Left ventricle myocardium superior (tissue), 1 donor: ENCODE measurements at regions of chr2 and their contacts with region 1.

Region 1: DNA sequence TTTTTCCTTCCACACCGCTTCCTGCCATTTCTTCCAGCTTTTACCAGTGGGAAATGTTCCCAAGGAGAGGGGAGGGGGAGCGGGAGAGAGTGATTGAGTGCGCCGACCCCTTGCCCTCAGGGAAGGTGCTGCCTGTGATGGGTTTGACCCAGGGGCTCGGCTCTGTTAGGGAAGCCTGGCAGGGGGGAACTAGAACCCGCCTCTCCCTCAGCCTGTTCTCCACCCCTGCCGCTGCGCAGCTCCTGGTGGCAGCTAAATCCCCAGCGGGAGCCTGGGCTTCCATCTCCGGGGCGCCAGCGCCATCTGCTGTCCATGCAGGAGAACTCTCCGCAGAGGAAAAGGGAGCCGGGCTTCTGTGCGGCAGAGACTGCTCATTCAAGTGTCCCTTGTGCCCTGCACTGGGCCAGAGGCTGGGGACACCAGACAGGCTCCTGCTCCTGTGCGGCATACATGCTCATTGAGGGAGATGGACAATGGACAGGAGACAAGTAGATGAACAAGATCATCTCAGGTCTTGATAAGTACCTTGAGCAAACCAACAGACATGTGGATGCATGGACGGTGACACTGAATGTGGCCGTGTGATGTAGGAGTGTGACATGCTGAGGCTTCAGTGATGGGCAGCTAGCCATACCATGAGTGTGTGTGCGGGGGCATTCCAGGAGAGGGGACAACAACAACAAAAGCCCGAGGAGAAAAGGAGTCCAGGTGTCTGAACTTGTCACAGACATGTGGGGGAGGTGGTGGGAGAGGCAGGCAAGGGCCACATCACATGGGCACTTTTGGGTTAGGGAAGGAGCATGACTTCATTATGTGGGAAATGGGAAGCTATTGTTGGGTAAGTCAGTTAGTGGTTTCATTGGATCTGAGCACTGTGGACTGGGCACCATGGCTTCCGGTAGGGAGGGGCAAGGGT is 13.3 kb downstream of the CHPF start:
- DNase-seq: peak; percentile 86
- ATAC-seq: peak; percentile 84

Region 2: DNA sequence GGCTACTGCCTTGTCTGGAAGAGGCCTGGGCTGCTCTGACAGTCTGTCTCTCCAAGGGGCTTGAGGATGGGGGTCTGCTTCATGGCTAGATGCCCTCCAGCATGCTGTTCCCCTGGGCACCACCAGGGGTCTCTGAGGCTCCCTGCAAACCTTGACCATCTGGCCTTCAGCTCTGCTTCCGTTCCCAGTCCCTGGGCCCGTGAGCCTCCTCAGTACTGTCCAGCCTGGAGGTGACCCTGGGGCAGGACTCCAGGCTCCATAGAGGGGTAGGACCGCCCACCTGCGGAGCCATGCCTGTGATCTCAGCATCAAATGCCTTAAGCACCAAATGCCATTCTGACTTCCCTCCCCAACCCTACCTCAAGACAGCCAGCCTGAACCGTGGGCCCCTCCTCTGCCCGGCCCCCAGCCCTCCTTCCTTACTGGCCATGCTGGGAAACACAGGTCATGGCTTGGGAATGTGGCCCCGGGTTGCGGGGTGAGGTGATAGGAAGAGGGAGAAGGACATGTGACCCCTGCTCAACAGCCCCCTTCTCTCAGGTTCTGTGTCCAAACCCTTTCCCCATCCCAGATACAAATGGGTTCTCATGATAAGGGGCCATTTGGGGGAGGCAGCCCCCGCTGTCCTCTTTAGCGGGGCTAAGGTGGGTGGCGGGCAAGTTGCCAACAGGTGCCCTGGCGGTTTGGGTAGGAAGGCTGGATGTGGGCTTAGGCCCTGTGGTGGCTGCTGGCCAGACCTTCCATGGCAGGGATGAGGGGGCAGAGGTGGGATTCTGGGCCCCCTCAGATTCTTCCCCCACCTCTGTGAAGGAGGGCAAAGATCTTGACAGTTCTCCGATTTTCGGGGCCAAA is 70.6 kb before region 1 on chr2:
- intact Hi-C with region 1: loop called (anchors 10 kb)
- DNase-seq: peak; percentile 74
- ATAC-seq: peak; percentile 64